Activated naive CD4-positive, alpha-beta T cell treated with anti-CD3 and anti-CD28 coated beads for 36 hours (primary cell): ENCODE measurements at regions of chr3 and their contacts with region 1.

Region 1: DNA sequence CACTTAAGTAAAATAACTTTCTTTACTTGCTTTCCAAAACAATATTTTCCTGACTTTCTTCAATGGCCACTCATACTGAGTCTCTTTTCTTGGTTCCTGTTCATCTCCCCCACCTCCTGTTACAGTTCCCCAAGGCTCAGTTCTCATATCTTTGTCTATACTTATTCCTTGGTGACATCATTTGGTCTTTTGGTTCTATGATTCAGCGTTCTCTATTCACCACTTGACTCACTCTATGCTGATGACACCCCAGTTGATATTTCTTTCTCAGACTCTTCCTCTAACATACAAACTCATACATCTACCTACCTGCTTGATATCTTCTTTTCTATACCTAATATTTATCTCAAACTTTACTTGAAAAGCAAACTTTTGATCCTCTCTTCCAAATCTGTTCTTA is 85.0 kb upstream of the P3H2 start:
- DNase-seq: no peak
- H3K4me3 Mint-ChIP-seq: no peak overlapping the region
- H3K27ac Mint-ChIP-seq: no peak overlapping the region
- H3K4me1 Mint-ChIP-seq: peaks cover 16% of the 10 kb centered on the region
- H3K27me3 Mint-ChIP-seq: peaks cover 18% of the 10 kb centered on the region

Region 2: DNA sequence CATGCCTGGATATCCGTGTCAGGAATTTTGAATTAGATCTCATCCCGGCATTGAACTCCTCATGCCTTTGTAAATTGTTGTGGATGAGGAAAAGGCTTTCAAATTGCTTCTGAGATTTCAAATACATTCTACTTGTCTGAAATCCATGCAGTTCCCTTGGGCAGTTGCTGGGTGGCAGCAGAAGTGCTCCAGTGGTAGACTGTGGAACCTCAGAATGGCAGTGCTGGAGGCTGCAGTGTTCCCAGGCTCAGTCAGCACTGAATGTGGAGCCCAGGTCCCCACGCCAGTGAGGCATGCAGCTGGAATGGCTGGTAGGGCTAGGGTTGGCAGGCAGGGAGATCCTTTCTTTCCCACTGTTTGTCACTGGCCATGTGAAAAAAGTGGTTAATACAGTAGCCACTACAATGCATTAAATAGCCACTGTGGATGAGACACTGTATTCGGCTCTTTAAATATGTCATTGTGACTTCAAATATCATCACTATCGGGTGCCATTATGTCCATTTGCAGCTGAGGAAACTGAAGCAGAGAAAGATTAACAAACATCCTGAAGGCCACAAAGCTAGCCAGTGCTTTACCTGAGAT is 935.4 kb before region 1 on chr3:
- CTCF ChIA-PET with region 1: no interaction called
- intact Hi-C with region 1: loop called (anchors 5 kb)
- DNase-seq: peak; percentile 59
- H3K4me3 Mint-ChIP-seq: no peak overlapping the region
- H3K27ac Mint-ChIP-seq: no peak overlapping the region
- H3K4me1 Mint-ChIP-seq: peaks cover 13% of the 10 kb centered on the region
- H3K27me3 Mint-ChIP-seq: no peaks in the 10 kb centered on the region

Region 3: DNA sequence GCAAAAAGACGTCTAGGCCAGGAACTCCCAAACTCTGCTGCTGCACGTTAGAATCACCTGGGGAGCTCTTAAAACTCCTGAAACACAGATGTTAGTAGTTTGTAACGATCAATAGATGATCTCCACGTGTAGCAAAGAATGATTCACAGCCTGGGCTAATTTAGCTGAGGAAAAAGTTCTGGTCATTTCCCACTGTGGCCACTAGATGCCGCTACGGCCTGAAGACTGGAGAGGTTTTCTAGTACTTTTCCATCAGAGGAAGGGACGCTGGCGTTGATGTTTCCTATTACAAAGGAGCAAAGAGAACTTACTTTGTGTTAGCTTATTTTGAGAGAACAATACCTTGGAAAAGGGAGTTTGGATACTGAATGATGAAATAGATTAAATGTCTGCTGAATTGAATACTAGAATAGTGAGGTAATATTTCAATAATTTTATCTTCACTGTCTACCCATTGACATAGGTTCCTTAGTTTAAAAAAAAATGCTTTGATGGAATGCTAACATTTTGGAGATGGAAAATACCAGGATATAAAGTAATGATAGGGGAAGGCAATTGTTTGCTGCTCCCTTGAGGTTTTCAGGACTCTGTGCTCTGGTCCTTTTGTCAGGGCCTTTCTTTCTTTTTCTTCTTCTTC is 244.1 kb before region 1 on chr3:
- CTCF ChIA-PET with region 1: interaction called, 17 read pairs
- intact Hi-C with region 1: loop called (anchors 1 kb)
- DNase-seq: peak; percentile 87
- H3K4me3 Mint-ChIP-seq: no peak overlapping the region
- H3K27ac Mint-ChIP-seq: no peak overlapping the region
- H3K4me1 Mint-ChIP-seq: peaks cover 5% of the 10 kb centered on the region
- H3K27me3 Mint-ChIP-seq: peaks cover 6% of the 10 kb centered on the region

Region 4: DNA sequence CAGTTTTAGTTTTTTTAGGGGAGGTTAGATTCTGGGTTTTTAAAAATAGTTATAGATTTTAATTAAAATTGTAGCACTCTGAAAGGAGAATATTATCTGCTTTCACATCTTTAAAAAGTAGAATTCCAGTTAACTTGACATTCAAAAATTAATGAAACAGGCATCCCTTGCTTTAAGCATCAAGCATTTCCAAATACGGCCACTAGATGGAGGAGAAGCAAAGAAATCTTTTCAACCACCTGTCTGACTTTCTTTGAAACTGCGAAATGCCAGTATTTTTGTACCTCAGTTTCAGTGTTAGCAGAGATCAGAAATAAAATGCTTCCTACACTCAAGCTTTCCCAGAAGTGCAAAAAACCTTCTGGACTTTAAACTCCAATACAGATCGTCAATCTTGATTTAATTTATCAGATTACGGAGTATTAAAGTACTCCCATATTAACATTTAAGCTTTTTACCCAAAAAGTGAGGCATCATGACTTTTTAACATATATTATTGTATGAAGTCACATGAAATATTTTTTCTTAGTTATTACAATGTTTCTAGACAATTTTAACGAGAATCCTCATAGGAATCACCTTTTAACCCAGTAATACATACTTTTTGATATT is 238.4 kb before region 1 on chr3:
- CTCF ChIA-PET with region 1: interaction called, 17 read pairs
- intact Hi-C with region 1: loop called (anchors 1 kb)
- DNase-seq: peak; percentile 28
- H3K4me3 Mint-ChIP-seq: no peak overlapping the region
- H3K27ac Mint-ChIP-seq: no peak overlapping the region
- H3K4me1 Mint-ChIP-seq: no peaks in the 10 kb centered on the region
- H3K27me3 Mint-ChIP-seq: peaks cover 3% of the 10 kb centered on the region

Region 5: DNA sequence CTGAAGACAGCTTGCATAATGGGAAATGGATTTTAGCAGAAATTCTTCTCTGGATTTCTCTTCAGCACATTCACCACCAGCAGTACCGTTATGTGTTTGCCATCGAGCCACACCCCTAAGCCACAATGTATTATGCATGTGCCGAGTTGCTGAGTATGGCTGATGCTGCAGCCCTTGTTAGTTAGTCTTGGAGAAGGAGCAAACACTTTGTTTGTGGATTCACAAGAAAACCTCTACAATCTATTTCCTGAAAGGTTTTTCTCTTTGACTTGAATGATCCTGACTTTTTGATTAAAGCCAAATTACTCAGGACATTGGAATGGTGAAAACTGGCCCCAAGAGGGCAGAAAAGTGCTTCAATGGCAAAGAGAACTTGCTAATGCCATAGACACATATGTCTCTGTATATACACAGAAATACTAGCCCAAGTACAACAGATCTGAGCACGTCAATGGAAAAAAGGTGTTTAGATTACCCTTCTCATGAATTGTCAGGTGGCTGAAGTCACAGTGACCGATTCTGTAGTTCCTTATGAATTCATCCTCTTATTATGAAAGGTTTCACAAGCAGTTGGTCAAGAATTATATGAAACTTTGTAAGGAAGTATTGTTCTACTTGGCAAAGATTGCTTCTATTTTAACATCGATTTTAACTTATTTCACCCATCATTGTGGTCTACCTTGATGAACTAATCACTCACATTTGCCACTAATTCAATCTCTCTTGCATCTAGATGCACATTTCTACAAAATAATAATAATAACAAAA is 188.0 kb before region 1 on chr3:
- CTCF ChIA-PET with region 1: no interaction called
- intact Hi-C with region 1: loop called (anchors 5 kb)
- DNase-seq: no peak
- H3K4me3 Mint-ChIP-seq: no peak overlapping the region
- H3K27ac Mint-ChIP-seq: no peak overlapping the region
- H3K4me1 Mint-ChIP-seq: no peaks in the 10 kb centered on the region
- H3K27me3 Mint-ChIP-seq: peaks cover 21% of the 10 kb centered on the region

Region 6: GRCh38 chr3:190281308-190282051 is 75.7 kb after region 1 on chr3:
- CTCF ChIA-PET with region 1: no interaction called
- intact Hi-C with region 1: no loop called
- DNase-seq: no peak
- H3K4me3 Mint-ChIP-seq: no peak overlapping the region
- H3K27ac Mint-ChIP-seq: no peak overlapping the region
- H3K4me1 Mint-ChIP-seq: no peaks in the 10 kb centered on the region
- H3K27me3 Mint-ChIP-seq: no peaks in the 10 kb centered on the region

Region 7: DNA sequence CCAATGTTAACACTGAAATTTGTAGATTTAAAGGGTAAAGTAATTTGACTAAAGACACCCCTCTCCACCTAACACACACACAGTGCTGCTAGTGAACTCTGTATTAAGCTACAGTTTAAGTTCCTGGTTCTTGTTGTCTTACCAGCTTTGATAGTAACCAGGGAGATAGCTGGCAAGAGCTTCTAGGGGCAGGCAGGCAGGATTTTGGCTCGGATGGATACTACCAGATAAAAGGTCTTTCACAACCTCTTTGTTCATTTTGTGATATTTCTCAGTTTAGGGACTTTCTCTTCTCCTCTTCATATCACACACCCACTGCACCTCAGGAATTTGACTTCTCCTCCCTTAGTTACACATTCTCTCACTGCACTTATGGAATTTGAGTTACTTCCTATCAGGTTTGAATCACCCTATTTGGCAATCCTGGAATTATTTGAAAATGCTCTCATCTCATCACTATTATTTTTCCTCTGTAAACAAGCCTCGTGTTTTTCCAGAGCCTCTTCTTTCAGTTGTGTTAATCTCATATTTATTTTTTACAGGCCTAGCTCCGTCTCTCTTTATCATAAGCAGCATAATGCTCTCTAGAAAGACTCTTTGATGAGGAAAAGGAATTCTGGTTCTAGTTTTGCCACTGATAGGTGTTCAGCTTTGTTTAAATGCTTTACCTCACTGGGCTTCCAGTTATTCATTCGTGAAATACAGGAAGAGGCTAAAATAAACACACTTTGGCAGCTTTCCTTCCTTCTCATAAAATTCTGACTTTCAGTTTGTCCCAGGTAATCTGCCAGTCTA is 139.5 kb after region 1 on chr3:
- CTCF ChIA-PET with region 1: no interaction called
- intact Hi-C with region 1: no loop called
- DNase-seq: no peak
- H3K4me3 Mint-ChIP-seq: no peak overlapping the region
- H3K27ac Mint-ChIP-seq: no peak overlapping the region
- H3K4me1 Mint-ChIP-seq: no peaks in the 10 kb centered on the region
- H3K27me3 Mint-ChIP-seq: peaks cover 5% of the 10 kb centered on the region

Region 8: DNA sequence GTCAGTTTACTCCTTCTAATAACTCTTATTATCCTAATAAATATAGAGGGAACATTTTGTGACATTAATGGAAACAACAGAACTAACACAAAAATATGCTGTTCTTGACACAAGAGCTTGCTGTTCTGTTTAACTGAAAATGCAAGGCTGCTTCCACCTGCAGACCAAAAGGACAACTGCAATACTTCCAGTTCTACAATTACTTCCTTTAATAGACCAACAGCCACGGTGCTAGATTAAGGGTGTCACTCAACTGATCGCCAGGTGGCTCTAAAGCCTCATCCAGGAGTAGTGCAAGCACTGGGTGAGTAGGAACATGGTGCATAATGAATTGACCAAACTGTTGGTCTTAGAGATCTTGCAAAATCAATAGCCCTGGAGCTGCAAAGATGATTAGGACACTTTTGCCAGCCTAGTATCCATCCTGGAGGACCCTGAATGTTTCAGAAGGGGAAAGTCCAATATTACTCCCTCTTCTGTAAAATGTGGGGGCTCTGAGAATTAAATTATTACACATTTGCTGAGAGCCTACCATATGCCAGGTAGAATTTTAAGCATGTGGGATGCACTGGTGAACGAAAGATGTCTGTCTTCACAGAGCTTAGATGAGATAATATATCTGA is 178.6 kb after region 1 on chr3:
- CTCF ChIA-PET with region 1: no interaction called
- intact Hi-C with region 1: loop called (anchors 5 kb)
- DNase-seq: peak; percentile 48
- H3K4me3 Mint-ChIP-seq: no peak overlapping the region
- H3K27ac Mint-ChIP-seq: no peak overlapping the region
- H3K4me1 Mint-ChIP-seq: peaks cover 8% of the 10 kb centered on the region
- H3K27me3 Mint-ChIP-seq: peaks cover 5% of the 10 kb centered on the region

Region 9: GRCh38 chr3:190491533-190492054 is 285.9 kb after region 1 on chr3:
- CTCF ChIA-PET with region 1: no interaction called
- intact Hi-C with region 1: loop called (anchors 1 kb)
- DNase-seq: peak; percentile 30
- H3K4me3 Mint-ChIP-seq: no peak overlapping the region
- H3K27ac Mint-ChIP-seq: no peak overlapping the region
- H3K4me1 Mint-ChIP-seq: peaks cover 24% of the 10 kb centered on the region
- H3K27me3 Mint-ChIP-seq: peaks cover 46% of the 10 kb centered on the region

Region 10: GRCh38 chr3:190701096-190701532 is 495.4 kb after region 1 on chr3:
- CTCF ChIA-PET with region 1: no interaction called
- intact Hi-C with region 1: no loop called
- DNase-seq: peak; percentile 34
- H3K4me3 Mint-ChIP-seq: no peak overlapping the region
- H3K27ac Mint-ChIP-seq: no peak overlapping the region
- H3K4me1 Mint-ChIP-seq: no peaks in the 10 kb centered on the region
- H3K27me3 Mint-ChIP-seq: peaks cover 37% of the 10 kb centered on the region